Naive thymus-derived CD8-positive, alpha-beta T cell (primary cell): ENCODE measurements at regions of chr22 and their contacts with region 1.

Region 1: DNA sequence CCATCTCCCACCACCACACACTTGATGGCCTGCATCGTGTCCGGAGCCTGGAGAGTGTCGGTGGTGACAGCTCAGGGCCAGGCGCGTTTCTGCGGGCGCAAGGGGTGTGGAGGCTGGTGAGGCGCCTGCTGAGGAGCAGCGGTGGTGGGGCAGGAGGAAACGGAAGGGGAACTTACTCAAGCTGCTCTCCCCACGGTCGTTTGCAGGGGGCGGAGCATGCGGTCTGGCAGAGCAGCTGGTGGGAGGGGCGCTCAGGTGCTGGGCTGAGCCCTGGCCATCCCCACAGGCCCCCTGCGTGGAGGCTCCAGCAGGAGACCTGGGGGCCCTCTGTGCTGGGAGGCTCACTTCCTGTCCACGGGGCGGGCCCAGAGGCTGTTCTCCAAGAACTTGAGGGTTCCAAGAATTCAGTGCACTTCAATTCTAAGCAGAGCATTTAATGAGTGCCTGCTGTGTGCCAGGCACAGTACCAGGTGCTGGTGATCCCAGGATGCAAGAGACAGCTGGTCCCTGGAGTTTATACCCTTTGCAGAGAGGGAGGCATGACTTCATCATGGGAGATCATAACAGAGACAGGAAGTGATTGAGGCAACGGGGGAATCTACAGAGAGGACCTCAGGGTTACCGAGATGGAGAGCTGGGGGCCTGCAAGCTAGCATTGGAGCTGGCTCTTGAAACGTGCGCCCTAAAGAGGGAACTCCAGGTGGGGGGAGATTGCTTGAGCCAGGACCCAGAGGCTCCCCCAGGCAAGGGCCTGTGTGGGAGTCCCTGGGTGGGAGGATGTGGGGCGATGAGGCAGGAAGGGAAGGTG is at the start of gene RAC2:
- DNase-seq: peak; percentile 71 to 92 (median 79)
- ATAC-seq: peak; percentile 62 to 65
- H3K4me3 Mint-ChIP-seq: peak within 1 kb of the TSS; percentile 80 to 99 (median 98)
- H3K27ac Mint-ChIP-seq: peak within 1 kb of the TSS; percentile 68 to 100 (median 98)
- H3K4me1 Mint-ChIP-seq: peaks cover 27 to 49% (median 48%) of the 10 kb centered on the region in 4 donors
- H3K27me3 Mint-ChIP-seq: no peaks in the 10 kb centered on the region
- polyA plus RNA-seq, gene RAC2: 740 to 1,115 (median 1,110) TPM

Region 2: GRCh38 chr22:37166675-37167066 is 77.6 kb before region 1 on chr22:
- POLR2A ChIA-PET with region 1: interaction called, 14 read pairs
- DNase-seq: peak; percentile 69 to 88 (median 79)
- ATAC-seq: peak; percentile 72 to 79
- H3K4me3 Mint-ChIP-seq: peak overlapping the region; percentile 69 to 96 (median 89)
- H3K27ac Mint-ChIP-seq: peak overlapping the region; percentile 84 to 99 (median 94)
- H3K4me1 Mint-ChIP-seq: peaks cover 46 to 98% (median 92%) of the 10 kb centered on the region in 4 donors
- H3K27me3 Mint-ChIP-seq: no peaks in the 10 kb centered on the region

Region 3: GRCh38 chr22:37229805-37230672 is 14.3 kb before region 1 on chr22:
- POLR2A ChIA-PET with region 1: interaction called, 1,090 read pairs
- DNase-seq: peak; percentile 77 to 96 (median 88)
- ATAC-seq: peak; percentile 69 to 84
- H3K4me3 Mint-ChIP-seq: peak overlapping the region; percentile 79 to 95 (median 88)
- H3K27ac Mint-ChIP-seq: peak overlapping the region; percentile 97 to 100 (median 98)
- H3K4me1 Mint-ChIP-seq: peaks cover 62 to 92% (median 90%) of the 10 kb centered on the region in 4 donors
- H3K27me3 Mint-ChIP-seq: no peaks in the 10 kb centered on the region

Region 4: GRCh38 chr22:37282385-37282677 is 38.0 kb after region 1 on chr22 and contains the start of gene CYTH4:
- POLR2A ChIA-PET with region 1: interaction called, 10 read pairs
- DNase-seq: peak; percentile 63 to 85 (median 66)
- ATAC-seq: peak; percentile 84 to 87
- H3K4me3 Mint-ChIP-seq: peak within 1 kb of the TSS; percentile 90 to 99 (median 94)
- H3K27ac Mint-ChIP-seq: peak within 1 kb of the TSS; percentile 93 to 100 (median 98)
- H3K4me1 Mint-ChIP-seq: peaks cover 40 to 84% (median 62%) of the 10 kb centered on the region in 4 donors
- H3K27me3 Mint-ChIP-seq: no peaks in the 10 kb centered on the region
- polyA plus RNA-seq, gene CYTH4: 48.9 to 60.8 (median 54.6) TPM

Region 5: DNA sequence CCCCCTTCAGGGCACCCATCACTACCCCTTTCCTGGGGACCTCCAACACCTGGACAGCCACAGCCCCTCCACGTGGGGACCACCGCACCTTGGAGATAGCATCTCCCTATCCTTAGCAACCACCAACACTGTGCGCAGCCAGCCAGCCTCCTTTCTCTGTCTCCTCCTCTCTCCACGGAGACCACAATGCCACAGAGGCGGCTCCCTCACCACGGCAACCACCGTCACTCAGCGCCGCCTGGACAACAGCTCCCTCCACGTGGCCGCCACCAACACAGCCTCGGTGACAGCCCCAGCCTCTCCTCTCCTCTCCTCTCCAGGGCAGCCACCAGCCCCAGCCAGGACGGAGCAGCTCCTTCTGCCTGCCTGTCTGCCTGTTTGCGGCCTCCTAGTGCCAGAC is 172.5 kb after region 1 on chr22:
- POLR2A ChIA-PET with region 1: no interaction called
- DNase-seq: peak in 6 of 10 donors; percentile 24 to 57 (median 54)
- ATAC-seq: peak; percentile 66 to 83
- H3K4me3 Mint-ChIP-seq: peak overlapping the region in 9 of 10 donors; percentile 9 to 70 (median 60)
- H3K27ac Mint-ChIP-seq: peak overlapping the region in 7 of 10 donors; percentile 20 to 82 (median 55)
- H3K4me1 Mint-ChIP-seq: peaks cover 30 to 55% (median 35%) of the 10 kb centered on the region in 4 donors
- H3K27me3 Mint-ChIP-seq: peaks cover 31 to 96% (median 46%) of the 10 kb centered on the region in 5 donors

Region 6: GRCh38 chr22:37486224-37486845 is 242.0 kb after region 1 on chr22 and contains the start of gene MFNG:
- POLR2A ChIA-PET with region 1: interaction called, 24 read pairs
- DNase-seq: peak; percentile 56 to 79 (median 64)
- ATAC-seq: peak; percentile 45 to 59
- H3K4me3 Mint-ChIP-seq: peak within 1 kb of the TSS; percentile 93 to 98 (median 96)
- H3K27ac Mint-ChIP-seq: peak within 1 kb of the TSS; percentile 95 to 100 (median 98)
- H3K4me1 Mint-ChIP-seq: peaks cover 59 to 91% (median 69%) of the 10 kb centered on the region in 4 donors
- H3K27me3 Mint-ChIP-seq: peaks cover 0 to 2% (median 0%) of the 10 kb centered on the region in 5 donors
- polyA plus RNA-seq, gene MFNG: 290 to 401 (median 329) TPM